ENCODE measurements at regions of chr4 and their contacts with region 1.

Region 1: DNA sequence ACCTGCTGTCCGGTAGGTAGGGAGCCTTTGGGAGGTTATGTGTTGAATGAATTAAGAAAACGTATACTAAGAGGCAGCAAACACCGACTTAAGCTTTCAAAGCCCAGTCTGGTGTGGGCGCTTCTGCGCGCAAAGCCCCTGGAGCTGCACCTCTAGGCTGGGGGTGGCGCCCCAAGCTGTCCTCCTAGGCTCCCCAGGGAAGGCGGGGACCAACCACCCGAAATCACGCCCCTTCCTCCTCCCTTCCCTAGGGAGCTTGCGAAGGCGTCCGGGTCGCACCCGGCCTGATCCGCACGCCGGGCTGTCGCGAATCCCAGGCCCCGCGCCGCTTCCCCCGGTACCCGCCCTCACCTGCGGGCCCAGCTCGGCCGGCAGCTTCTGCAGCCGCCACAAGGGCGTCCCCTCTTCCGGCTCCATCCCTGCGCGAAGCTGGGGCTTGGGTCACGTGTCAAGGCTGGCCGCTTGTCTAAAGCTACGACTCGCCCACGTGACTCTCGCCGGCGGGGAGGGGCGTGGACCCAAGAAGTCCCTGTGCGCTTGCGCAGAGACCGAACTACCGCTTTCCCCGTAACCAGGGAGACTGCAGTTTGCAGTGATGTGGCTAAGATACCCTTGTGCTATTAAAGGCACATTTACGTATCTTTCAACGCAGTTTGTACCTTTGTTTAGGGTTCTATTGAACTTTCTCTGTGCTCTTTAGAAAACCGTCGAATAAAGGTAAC is at the start of gene COMMD8:
- DNase-seq: peak; percentile 98
- H3K4me3 ChIP-seq: peak within 1 kb of the TSS; percentile 77 to 94 (median 85)
- H3K27ac ChIP-seq: peak within 1 kb of the TSS; percentile 84 to 90 (median 87)
- H3K4me1 ChIP-seq: peaks cover 0 to 16% (median 7%) of the 10 kb centered on the region in 4 donors
- H3K27me3 ChIP-seq: no peaks in the 10 kb centered on the region
- CTCF ChIP-seq: peak in 2 of 4 experiments; percentile 43 to 45
- EP300 ChIP-seq: peak in 1 of 4 donors; percentile 4
- POLR2A ChIP-seq: peak in 1 of 2 donors; percentile 17
- total RNA-seq, gene COMMD8: 10.8 to 21.4 (median 17.5) TPM

Region 2: DNA sequence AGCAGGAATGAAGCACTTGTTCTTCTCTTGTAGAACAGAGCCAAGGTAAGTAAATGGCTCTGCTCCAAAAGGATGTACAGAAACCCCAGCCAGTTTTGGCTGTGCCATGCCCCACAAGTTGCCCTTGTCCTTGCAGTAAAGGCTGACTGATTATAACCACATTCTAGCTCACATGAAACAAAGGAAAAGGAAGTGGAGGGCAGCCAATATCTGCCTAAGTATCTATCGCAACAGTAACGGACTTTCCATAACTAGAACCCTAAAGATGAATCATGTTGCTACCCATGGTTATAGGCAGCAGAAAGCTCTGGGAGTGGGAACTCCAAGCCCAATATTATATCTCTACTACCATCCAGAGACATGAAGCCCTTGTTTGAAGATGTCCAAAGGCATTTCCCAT is 95.6 kb before region 1 on chr4:
- intact Hi-C with region 1: no loop called
- DNase-seq: no peak
- H3K4me3 ChIP-seq: no peak overlapping the region
- H3K27ac ChIP-seq: no peak overlapping the region
- H3K4me1 ChIP-seq: no peaks in the 10 kb centered on the region
- H3K27me3 ChIP-seq: no peaks in the 10 kb centered on the region
- CTCF ChIP-seq: no peak
- EP300 ChIP-seq: no peak
- POLR2A ChIP-seq: no peak

Region 3: DNA sequence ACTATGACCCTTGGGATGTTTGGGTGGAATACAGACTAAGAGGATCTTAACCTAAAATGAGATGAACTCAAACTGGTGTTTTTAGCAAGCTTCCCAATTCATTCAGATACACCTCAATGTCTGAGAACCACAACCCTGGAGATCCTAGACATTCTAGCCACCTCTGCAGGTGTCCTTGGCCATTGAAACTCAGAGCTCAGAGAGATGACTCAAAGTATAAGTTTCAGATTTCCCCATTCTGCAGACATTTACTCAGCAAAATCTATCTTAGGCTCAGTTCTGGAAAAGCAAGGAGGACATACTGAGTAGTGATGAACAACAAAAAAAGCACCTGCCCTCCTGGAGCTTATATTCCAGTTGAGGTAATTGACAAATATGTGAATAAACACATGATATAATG is 47.7 kb before region 1 on chr4:
- intact Hi-C with region 1: no loop called
- DNase-seq: no peak
- H3K4me3 ChIP-seq: no peak overlapping the region
- H3K27ac ChIP-seq: no peak overlapping the region
- H3K4me1 ChIP-seq: no peaks in the 10 kb centered on the region
- H3K27me3 ChIP-seq: no peaks in the 10 kb centered on the region
- CTCF ChIP-seq: no peak
- EP300 ChIP-seq: no peak
- POLR2A ChIP-seq: no peak

Region 4: DNA sequence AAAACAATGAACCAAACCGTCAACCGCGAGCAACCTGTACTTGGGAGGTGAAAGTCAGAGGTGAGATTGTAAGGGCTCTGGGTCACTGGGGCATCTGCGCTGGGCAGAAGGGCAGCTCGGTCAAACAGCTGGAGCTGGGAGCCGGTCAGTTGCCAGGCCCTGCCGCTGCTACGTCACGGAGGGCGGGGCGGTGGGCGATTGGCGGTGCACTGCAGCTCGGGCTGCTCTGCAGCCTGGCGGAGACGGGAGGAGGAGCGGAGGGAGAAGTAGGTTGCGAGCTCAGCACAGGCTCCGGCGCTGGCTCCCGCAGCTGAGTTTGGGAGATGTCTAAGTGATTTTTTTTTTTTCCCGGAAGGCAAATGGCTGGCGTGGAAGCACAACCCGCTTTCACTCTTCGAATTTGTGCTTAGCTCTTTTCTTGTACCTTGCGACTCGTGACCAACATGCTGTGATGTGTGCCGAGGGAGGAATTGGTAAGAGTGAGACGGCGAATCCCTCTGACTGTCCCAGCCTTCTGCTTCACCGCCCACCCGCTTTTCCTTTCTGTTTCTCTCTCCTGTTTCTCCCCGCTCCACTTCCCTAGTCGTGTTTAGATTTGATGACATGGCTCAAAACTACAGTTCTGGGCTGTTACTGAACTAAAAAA is 21.8 kb after region 1 on chr4 and contains the start of gene ATP10D:
- intact Hi-C with region 1: loop called (anchors 2 kb)
- DNase-seq: peak; percentile 98
- H3K4me3 ChIP-seq: peak within 1 kb of the TSS; percentile 54 to 69 (median 60)
- H3K27ac ChIP-seq: peak within 1 kb of the TSS; percentile 90 to 94 (median 93)
- H3K4me1 ChIP-seq: peaks cover 0 to 29% (median 12%) of the 10 kb centered on the region in 4 donors
- H3K27me3 ChIP-seq: no peaks in the 10 kb centered on the region
- CTCF ChIP-seq: peak in 2 of 4 experiments; percentile 15 to 18
- EP300 ChIP-seq: peak in 1 of 4 donors; percentile 4
- POLR2A ChIP-seq: peak; percentile 75 to 76
- total RNA-seq, gene ATP10D: 16.8 to 21.0 (median 18.7) TPM

Region 5: DNA sequence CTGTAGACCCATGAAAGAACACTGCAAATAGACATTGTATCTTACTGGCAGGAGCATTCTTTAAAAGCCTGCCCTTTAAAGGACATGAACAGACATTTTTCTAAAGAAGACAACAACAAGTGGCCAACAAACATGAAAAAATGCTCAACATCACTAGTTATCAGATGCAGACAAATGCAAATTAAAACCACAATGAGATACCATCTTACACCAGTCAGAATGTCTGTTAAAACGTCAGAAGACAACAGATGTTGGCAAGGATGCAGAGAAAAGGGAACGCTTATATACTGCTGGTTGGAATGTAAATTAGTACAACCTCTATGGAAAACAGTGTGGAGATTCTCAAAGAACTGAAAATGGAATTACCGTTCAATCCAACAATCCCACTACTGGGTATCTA is 98.9 kb after region 1 on chr4:
- intact Hi-C with region 1: loop called (anchors 1 kb)
- DNase-seq: no peak
- H3K4me3 ChIP-seq: no peak overlapping the region
- H3K27ac ChIP-seq: no peak overlapping the region
- H3K4me1 ChIP-seq: no peaks in the 10 kb centered on the region
- H3K27me3 ChIP-seq: no peaks in the 10 kb centered on the region
- CTCF ChIP-seq: no peak
- EP300 ChIP-seq: no peak
- POLR2A ChIP-seq: no peak

Region 6: DNA sequence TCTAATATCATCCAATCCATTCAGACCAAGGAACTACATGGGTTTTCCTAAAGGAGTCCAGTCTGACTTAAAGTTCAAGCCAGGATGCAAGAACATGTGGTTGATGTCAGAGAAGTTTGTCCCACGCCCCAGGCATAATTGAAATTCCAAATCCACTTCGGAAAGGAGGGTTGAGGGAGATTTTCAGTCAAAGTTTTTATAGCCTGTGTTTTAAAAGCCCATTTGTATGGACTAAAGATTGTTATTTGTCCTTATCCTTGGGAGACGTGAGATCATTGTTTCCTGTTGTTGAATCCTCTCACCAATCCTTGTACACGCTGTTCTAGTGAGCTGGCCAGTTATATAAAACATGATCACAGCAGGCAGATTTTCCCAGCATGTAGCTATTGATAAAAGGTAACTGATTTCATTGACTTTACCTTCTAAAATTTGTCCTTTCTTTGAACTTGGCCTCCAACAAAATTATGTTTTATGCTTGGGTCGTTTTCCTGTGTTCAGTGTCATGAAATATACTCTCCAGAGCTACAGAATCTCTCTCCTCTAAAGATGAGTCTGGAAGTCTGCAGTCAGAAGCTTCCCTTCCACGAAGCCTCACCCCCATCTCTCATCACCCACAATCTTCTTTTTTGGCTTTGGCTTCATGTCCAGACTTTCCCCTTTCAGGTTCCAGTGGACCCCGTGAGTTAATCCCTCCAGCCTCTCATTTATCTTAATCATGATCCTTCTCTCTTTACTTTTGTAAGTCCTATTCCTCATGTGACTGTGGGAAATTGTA is 114.6 kb after region 1 on chr4:
- intact Hi-C with region 1: no loop called
- DNase-seq: peak; percentile 73
- H3K4me3 ChIP-seq: no peak overlapping the region
- H3K27ac ChIP-seq: peak overlapping the region; percentile 53 to 70 (median 62)
- H3K4me1 ChIP-seq: no peaks in the 10 kb centered on the region
- H3K27me3 ChIP-seq: no peaks in the 10 kb centered on the region
- CTCF ChIP-seq: no peak
- EP300 ChIP-seq: peak in 1 of 4 donors; percentile 5
- POLR2A ChIP-seq: no peak

Measured in sigmoid colon (tissue), 7 donors.